Ascending aorta (tissue), 2 donors: ENCODE measurements at regions of chr5 and their contacts with region 1.

Region 1: GRCh38 chr5:178590141-178590923 is at the start of gene COL23A1:
- DNase-seq: peak in 1 of 2 donors; percentile 83
- H3K4me3 ChIP-seq: peak within 1 kb of the TSS; percentile 62 to 67
- H3K27ac ChIP-seq: peak within 1 kb of the TSS; percentile 64 to 66
- H3K4me1 ChIP-seq: peaks cover 7 to 16% of the 10 kb centered on the region in 2 donors
- H3K27me3 ChIP-seq: no peaks in the 10 kb centered on the region
- CTCF ChIP-seq: peak; percentile 36 to 74 (median 47)
- total RNA-seq, gene COL23A1: 4.3 TPM

Region 2: GRCh38 chr5:178279725-178280438 is 310.4 kb before region 1 on chr5:
- intact Hi-C with region 1: loop called (anchors 1 kb)
- DNase-seq: peak in 1 of 2 donors; percentile 88
- H3K4me3 ChIP-seq: no peak overlapping the region
- H3K27ac ChIP-seq: no peak overlapping the region
- H3K4me1 ChIP-seq: no peaks in the 10 kb centered on the region
- H3K27me3 ChIP-seq: no peaks in the 10 kb centered on the region
- CTCF ChIP-seq: peak; percentile 80 to 95 (median 90)

Region 3: DNA sequence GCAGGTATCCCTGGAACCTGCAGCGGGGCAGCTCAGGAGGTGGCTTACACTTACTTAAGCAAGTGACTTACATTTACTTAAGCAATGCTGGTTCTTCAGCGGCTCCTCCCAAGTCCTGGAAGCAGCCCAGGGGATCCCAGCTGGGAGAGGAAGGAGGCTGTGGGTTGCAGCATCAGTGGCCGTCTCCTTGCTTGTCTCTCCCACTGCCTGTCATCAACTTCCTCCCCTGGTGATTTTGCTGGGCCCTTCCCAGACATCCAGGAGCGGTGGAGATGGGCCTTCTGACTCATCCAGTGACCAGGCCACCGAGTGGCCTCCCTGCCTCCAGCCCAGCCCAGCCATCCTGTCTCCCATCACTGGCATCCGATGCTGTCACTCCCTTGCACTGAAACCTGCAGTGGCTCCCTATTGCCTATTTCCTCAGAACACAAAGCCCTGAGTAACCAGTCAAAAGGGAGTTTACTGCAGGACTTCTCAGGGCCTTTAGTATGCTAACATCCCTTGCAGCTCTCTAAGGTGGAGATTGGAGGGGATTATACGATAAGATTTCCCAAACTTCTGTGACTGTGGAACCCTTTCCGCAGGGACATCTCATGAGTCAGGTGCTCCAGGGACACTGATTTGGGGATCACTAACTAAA is 201.8 kb before region 1 on chr5:
- intact Hi-C with region 1: no loop called
- DNase-seq: no peak
- H3K4me3 ChIP-seq: no peak overlapping the region
- H3K27ac ChIP-seq: no peak overlapping the region
- H3K4me1 ChIP-seq: no peaks in the 10 kb centered on the region
- H3K27me3 ChIP-seq: no peaks in the 10 kb centered on the region
- CTCF ChIP-seq: no peak

Region 4: DNA sequence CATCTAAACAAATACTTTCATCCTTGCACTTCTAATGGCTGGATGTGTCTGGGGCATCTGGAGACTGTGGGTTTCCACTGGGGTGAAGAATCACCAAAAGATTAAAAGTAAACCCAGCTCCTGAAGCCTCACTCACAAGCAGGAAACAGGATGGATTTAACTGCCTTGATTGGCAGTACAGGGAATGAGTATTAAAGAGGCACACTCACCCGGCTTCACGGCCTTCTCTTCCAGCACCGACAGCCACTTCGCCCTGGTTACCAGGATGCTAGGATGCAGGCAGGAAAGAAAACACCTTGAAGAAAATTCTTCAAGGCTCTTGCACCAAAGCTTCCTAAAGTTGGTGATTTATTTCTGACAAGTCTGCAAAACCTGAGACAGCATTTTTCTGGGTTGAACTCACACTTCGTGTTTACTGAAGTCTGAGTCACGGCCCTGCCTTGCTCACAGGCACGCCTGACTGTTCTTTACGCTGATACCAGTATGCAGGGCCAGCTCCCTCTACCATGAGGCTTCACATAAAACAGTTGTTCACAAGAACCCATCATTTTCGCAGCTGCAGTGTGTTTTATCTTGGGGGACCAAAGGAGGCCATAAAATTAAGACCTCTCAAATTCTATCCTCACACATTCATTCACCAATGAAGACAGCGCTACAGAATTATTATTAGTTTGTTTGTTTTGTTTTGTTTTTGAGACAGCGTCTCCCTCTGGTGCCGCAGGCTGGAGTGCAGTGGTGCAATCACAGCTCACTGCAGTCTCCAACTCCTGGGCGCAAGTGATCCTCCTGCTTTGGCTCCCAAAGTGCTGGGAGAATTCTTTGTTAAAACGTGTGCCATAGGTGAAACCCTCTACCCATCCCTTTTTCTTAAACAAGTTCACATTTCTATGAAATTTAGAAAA is 196.8 kb after region 1 on chr5:
- intact Hi-C with region 1: no loop called
- DNase-seq: no peak
- H3K4me3 ChIP-seq: no peak overlapping the region
- H3K27ac ChIP-seq: no peak overlapping the region
- H3K4me1 ChIP-seq: no peaks in the 10 kb centered on the region
- H3K27me3 ChIP-seq: no peaks in the 10 kb centered on the region
- CTCF ChIP-seq: no peak